Psoas muscle (tissue), 8 donors: ENCODE measurements at regions of chr18 and their contacts with region 1.

Region 1: GRCh38 chr18:42005782-42006181 is 50.7 kb downstream of the PIK3C3 start:
- DNase-seq: no peak
- ATAC-seq: no peak
- H3K4me3 ChIP-seq: no peak overlapping the region
- H3K27ac ChIP-seq: no peak overlapping the region
- H3K4me1 ChIP-seq: no peaks in the 10 kb centered on the region
- H3K27me3 ChIP-seq: no peaks in the 10 kb centered on the region
- CTCF ChIP-seq: no peak

Region 2: DNA sequence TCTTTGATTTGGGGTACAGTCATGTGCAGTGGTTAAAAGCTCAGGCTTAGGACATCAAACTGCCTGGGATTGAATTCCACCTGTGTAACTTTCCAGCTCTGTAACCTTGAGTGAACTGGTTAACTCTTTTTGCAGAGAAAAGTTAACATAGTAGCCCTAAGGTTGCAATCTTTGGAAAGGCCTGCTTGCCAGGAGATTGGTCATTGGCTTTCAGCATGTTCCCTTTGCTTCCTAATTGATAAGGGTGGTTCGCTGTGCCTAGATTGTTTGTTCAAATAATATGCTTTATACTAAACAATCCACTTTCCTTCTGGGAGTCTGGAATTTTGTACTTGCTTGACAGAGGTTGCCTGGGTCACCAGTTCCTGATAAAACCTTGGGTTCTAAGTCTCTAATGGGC is 36.0 kb after region 1 on chr18:
- intact Hi-C with region 1: loop called in 1 of 2 experiments (anchors 5 kb)
- DNase-seq: no peak
- ATAC-seq: no peak
- H3K4me3 ChIP-seq: no peak overlapping the region
- H3K27ac ChIP-seq: no peak overlapping the region
- H3K4me1 ChIP-seq: no peaks in the 10 kb centered on the region
- H3K27me3 ChIP-seq: no peaks in the 10 kb centered on the region
- CTCF ChIP-seq: no peak